A673 (cell line): ENCODE measurements at regions of chr3 and their contacts with region 1.

Region 1: GRCh38 chr3:152471814-152472671 is 203.3 kb downstream of the MBNL1 start:
- DNase-seq: peak; percentile 81
- H3K4me3 ChIP-seq: peak overlapping the region; percentile 20
- H3K27ac ChIP-seq: no peak overlapping the region
- H3K4me1 ChIP-seq: no peaks in the 10 kb centered on the region
- H3K27me3 ChIP-seq: no peaks in the 10 kb centered on the region
- CTCF ChIP-seq: peak; percentile 80

Region 2: GRCh38 chr3:152071924-152072323 is 400.1 kb before region 1 on chr3:
- CTCF ChIA-PET with region 1: interaction called, 3 read pairs
- POLR2A ChIA-PET with region 1: no interaction called
- intact Hi-C with region 1: loop called (anchors 1 kb)
- DNase-seq: peak; percentile 64
- H3K4me3 ChIP-seq: no peak overlapping the region
- H3K27ac ChIP-seq: no peak overlapping the region
- H3K4me1 ChIP-seq: peaks cover 11% of the 10 kb centered on the region
- H3K27me3 ChIP-seq: no peaks in the 10 kb centered on the region
- CTCF ChIP-seq: peak; percentile 56

Region 3: GRCh38 chr3:152574461-152575079 is 102.5 kb after region 1 on chr3:
- CTCF ChIA-PET with region 1: interaction called, 7 read pairs
- POLR2A ChIA-PET with region 1: no interaction called
- intact Hi-C with region 1: loop called (anchors 2 kb)
- DNase-seq: peak; percentile 76
- H3K4me3 ChIP-seq: no peak overlapping the region
- H3K27ac ChIP-seq: no peak overlapping the region
- H3K4me1 ChIP-seq: no peaks in the 10 kb centered on the region
- H3K27me3 ChIP-seq: no peaks in the 10 kb centered on the region
- CTCF ChIP-seq: peak; percentile 70

Region 4: DNA sequence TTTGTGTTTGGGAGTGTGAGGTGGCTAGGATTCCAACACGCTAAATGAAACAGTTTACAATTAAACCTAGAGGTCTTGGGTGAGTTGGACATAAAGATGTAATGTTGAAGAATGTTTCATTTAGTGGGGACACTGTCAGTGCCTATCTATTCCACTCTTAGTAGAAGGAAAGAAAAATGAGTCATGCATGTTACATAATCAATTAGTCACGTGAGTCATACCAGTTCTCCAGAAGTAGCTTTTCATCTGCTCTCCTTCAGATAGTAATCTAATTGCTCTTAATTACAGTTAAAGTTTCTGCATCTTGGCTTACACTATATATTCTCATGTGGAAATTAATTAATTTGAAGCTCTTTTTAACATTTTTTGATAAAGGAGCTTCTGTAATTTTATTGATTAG is 247.2 kb after region 1 on chr3:
- CTCF ChIA-PET with region 1: no interaction called
- POLR2A ChIA-PET with region 1: no interaction called
- intact Hi-C with region 1: loop called (anchors 10 kb)
- DNase-seq: peak; percentile 84
- H3K4me3 ChIP-seq: no peak overlapping the region
- H3K27ac ChIP-seq: peak overlapping the region; percentile 48
- H3K4me1 ChIP-seq: peaks cover 13% of the 10 kb centered on the region
- H3K27me3 ChIP-seq: no peaks in the 10 kb centered on the region
- CTCF ChIP-seq: no peak